Aorta (tissue), 5 donors: ENCODE measurements at regions of chr3 and their contacts with region 1.

Region 1: GRCh38 chr3:40309418-40309924 is at the start of gene EIF1B:
- DNase-seq: peak; percentile 99 to 100
- ATAC-seq: peak; percentile 99
- H3K4me3 ChIP-seq: peak within 1 kb of the TSS; percentile 94 to 100
- H3K27ac ChIP-seq: peak within 1 kb of the TSS; percentile 97 to 98
- H3K4me1 ChIP-seq: no peaks in the 10 kb centered on the region
- H3K27me3 ChIP-seq: no peaks in the 10 kb centered on the region
- total RNA-seq, gene EIF1B: 51.3 to 51.6 TPM

Region 2: DNA sequence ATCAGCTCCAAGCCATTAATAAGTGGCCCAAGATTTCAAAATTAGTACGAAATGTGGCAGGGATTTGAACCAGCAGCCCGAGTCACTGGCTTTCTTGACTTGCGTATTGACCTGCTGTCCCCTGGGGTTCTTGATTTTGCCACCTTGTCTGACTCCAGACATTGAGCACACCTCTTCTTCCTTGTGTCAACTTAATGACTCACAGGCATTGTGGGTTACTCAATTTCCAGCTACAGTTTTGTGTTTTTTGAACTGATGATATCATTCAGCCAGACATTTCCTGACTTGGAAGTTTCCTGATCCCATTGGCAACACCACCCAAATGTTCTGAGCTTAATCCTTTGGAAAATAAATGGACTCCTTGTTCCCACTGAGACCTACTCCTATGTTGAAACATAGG is 777.8 kb before region 1 on chr3:
- intact Hi-C with region 1: loop called in 1 of 2 experiments (anchors 5 kb)
- DNase-seq: no peak
- ATAC-seq: peak; percentile 56
- H3K4me3 ChIP-seq: no peak overlapping the region
- H3K27ac ChIP-seq: peak overlapping the region in 1 of 2 donors; percentile 43
- H3K4me1 ChIP-seq: peaks cover 1 to 3% of the 10 kb centered on the region in 2 donors
- H3K27me3 ChIP-seq: no peaks in the 10 kb centered on the region